BJ (cell line): ENCODE measurements at regions of chr17 and their contacts with region 1.

Region 1: DNA sequence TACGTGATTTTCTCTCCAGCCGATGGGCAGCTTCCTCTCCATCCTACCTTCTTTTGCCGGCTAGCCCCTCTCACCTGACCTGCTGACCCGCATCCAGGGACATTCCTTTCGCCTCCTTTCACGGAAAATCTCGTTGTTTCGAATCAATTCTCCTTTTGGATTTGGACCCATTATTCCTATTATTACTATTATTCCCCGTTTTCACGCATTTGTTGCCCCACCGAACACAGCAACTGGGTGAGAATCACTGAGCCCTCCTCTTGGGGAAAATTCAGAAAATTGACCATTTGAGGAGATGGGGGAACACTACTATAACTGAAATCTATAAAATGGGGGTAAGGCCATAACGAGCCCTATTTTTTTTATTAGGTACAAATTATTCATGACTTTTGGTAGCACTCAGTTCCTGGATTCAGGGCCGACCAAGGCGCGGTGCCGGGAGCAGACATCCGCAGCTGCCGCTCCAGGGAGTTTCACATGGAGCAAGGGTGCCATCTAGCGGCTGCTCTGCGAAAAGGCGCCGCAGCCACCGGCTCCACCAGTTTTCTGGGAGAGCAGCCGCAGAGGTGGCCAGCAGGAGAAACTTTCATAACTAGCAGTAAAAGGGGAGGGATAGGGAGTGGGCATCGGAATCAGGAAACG is 3.3 kb upstream of the HOXB8 start:
- DNase-seq: no peak
- H3K4me3 ChIP-seq: no peak overlapping the region
- H3K27me3 ChIP-seq: peaks cover 79% of the 10 kb centered on the region
- CTCF ChIP-seq: peak; percentile 96

Region 2: DNA sequence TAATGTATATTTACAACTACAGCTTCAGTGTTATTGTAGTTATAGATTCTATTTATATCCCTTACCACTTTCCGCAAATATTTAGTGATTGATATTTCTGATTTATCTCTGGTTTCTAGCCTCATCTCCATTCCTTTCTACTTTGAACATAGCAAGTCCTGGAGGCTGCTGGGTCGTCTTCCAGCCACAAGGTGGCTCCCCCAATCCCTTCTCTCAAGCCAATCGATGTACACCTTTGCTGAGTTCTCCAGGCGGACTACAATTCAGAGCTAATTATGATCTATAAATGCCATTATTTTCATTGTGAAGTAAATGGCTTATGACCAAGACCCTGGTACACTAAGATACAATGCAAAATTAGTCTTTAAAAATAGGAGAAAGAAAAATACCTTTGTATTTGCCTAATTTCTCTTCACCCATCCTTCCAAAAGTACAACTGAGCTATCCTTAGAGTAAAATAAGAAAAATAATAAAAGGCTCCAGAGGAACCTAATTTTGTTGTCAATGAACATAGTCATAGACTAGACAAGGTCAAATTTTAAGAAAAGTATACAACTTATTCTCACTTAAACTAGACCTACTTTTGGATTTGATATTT is 310.5 kb before region 1 on chr17:
- CTCF ChIA-PET with region 1: interaction called, 11 read pairs
- POLR2A ChIA-PET with region 1: no interaction called
- DNase-seq: no peak
- H3K4me3 ChIP-seq: no peak overlapping the region
- H3K27me3 ChIP-seq: peaks cover 27% of the 10 kb centered on the region
- CTCF ChIP-seq: peak; percentile 94

Region 3: GRCh38 chr17:48335858-48336500 is 282.4 kb before region 1 on chr17:
- CTCF ChIA-PET with region 1: interaction called, 13 read pairs
- POLR2A ChIA-PET with region 1: no interaction called
- DNase-seq: peak; percentile 4
- H3K4me3 ChIP-seq: no peak overlapping the region
- H3K27me3 ChIP-seq: peaks cover 7% of the 10 kb centered on the region
- CTCF ChIP-seq: peak; percentile 62

Region 4: DNA sequence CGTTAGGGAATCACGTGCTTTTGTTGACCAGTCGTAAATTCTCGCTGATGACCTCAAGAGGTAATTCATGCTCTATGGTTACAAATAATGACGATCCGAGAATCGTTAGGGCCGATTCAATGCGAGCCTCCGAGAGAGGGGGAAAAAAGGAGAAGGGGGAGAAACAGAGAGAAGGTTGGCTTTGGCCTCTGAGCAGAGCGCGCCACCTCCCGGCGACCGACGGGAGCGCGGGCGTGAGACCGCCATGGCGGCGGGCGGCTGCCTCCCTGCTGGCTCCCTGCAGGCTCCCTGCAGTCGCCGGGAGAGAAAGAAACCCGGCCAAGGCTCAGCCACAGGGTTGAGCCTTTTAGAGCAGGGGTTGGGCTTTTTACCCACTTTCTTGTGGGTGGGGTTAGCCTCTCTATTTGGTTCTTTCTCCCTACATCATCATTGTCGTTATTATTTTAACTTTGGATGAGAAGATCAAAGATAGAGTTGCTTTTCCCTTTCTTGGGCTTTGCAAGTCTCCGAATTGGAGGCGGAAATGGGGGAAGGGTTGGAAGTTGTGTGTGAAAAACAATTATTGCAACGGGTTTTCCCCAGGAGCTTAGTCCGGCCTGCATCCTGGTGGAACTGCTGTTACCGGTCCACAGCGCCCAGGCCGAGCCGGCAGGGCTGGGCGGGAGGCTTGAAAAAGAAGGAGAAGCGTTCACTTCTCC is 24.4 kb before region 1 on chr17:
- CTCF ChIA-PET with region 1: interaction called, 11 read pairs
- POLR2A ChIA-PET with region 1: no interaction called
- DNase-seq: no peak
- H3K4me3 ChIP-seq: no peak overlapping the region
- H3K27me3 ChIP-seq: peaks cover 86% of the 10 kb centered on the region
- CTCF ChIP-seq: peak; percentile 76

Region 5: DNA sequence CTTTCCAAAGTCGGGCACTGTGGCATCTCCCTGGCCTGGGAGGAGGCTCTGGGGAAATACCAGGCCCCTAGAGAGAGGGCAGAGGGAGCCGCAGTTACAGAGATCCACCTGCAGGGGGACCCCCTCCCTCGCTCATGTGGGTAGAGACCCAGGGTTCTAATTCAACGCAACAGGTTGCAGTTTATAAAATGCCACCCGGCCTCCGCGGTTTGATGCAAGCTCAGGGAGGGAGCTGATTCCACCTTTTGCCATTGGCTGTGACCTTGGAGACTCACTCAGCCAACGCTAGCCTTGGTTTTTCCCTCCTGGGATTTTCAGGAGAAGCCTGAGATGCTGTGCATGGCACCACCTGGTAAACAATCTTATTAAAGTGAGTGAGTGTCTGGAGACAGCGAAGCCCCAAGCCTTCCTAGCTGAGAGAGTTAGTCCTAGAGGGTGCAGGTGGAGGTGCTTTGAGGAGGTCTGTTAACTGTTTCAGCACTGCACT is 186.6 kb after region 1 on chr17:
- CTCF ChIA-PET with region 1: no interaction called
- POLR2A ChIA-PET with region 1: no interaction called
- DNase-seq: no peak
- H3K4me3 ChIP-seq: no peak overlapping the region
- H3K27me3 ChIP-seq: peaks cover under 1% of the 10 kb centered on the region
- CTCF ChIP-seq: peak; percentile 97